Head of caudate nucleus (tissue), 42 donors: ENCODE measurements at regions of chr9 and their contacts with region 1.

Region 1: GRCh38 chr9:76704593-76705204 is 59.5 kb upstream of the PCA3 start:
- DNase-seq: peak in 12 of 42 donors; percentile 27 to 74 (median 48)

Region 2: GRCh38 chr9:76393963-76394679 is 310.6 kb before region 1 on chr9 and contains the start of gene RFK:
- intact Hi-C with region 1: loop called (anchors 10 kb)
- DNase-seq: peak; percentile 77 to 99 (median 93)

Region 3: DNA sequence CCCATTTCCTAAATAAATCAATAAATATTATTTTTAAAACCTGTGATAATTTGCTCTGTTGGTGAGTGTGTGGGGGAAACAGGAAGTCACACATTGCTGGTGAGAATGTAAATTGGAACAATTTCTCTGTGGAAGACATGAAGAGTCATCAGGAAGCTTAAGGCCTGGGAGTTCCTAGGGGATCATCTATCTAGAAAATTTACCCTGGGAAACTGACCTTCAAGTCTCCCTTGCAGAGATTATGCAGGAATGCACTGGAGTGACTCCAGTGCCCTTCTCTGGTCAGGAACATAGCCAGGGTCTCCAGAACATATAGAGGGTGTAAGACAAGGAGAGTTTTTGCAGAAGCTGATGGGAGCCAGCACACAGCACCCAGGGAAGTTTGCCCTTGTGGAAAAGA is 258.7 kb before region 1 on chr9:
- intact Hi-C with region 1: loop called (anchors 5 kb)
- DNase-seq: no peak

Region 4: DNA sequence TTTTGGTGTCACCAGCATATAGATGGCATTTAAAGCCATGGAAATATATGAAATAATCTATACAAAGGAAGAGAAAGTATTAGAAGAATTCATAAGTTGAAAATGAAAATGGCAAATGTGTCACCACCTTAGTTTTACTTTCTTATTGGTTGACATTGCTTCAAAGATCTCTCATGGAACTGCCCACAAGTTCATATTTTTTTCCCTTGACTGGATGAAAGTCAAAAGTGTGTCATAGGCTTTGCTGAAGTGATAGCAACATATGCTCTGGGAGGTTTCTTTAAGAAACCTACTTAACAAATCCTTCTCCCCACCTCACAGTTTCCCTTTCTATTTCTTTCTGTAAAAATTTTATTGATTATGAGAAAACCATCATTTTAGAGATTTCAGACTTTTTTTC is 599.8 kb after region 1 on chr9:
- intact Hi-C with region 1: no loop called
- DNase-seq: no peak